ENCODE measurements at regions of chr10 and their contacts with region 1.

Region 1: GRCh38 chr10:93482145-93482834 is at the start of gene MYOF:
- DNase-seq: peak; percentile 71
- ATAC-seq: peak; percentile 83
- H3K4me3 Mint-ChIP-seq: peak within 1 kb of the TSS; percentile 81
- H3K27ac Mint-ChIP-seq: peak within 1 kb of the TSS; percentile 83
- H3K4me1 Mint-ChIP-seq: peaks cover 18% of the 10 kb centered on the region
- H3K27me3 Mint-ChIP-seq: peaks cover 25% of the 10 kb centered on the region
- total RNA-seq, gene MYOF: 5.5 to 6.6 TPM

Region 2: DNA sequence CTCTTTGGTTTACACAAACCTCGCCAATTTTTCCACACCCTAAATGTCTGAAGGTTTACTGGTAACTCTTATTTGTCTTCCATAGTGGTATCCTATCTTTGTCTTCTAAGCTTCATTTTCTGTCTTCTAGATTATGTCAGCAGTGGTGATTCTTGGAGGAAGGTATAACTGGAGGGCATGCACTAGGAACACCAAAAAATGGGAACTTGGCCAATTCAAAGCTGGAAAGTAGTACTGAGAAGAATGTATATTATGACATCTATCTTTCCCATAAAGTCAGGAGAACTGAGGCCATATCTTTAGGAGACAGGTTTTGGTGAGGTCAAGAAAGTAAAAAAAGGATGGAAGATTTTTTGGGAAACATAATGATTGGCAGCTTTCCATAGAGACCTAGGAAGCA is 1304.7 kb before region 1 on chr10:
- CTCF ChIA-PET with region 1: no interaction called
- DNase-seq: no peak
- ATAC-seq: no peak
- H3K4me3 Mint-ChIP-seq: no peak overlapping the region
- H3K27ac Mint-ChIP-seq: no peak overlapping the region
- H3K4me1 Mint-ChIP-seq: peaks cover 1% of the 10 kb centered on the region
- H3K27me3 Mint-ChIP-seq: no peaks in the 10 kb centered on the region

Region 3: GRCh38 chr10:93160829-93161228 is 321.5 kb before region 1 on chr10:
- CTCF ChIA-PET with region 1: no interaction called
- DNase-seq: no peak
- ATAC-seq: no peak
- H3K4me3 Mint-ChIP-seq: no peak overlapping the region
- H3K27ac Mint-ChIP-seq: no peak overlapping the region
- H3K4me1 Mint-ChIP-seq: no peaks in the 10 kb centered on the region
- H3K27me3 Mint-ChIP-seq: peaks cover 15% of the 10 kb centered on the region

Region 4: GRCh38 chr10:93363891-93364648 is 118.2 kb before region 1 on chr10:
- CTCF ChIA-PET with region 1: interaction called, 11 read pairs
- DNase-seq: no peak
- ATAC-seq: no peak
- H3K4me3 Mint-ChIP-seq: no peak overlapping the region
- H3K27ac Mint-ChIP-seq: no peak overlapping the region
- H3K4me1 Mint-ChIP-seq: peaks cover 2% of the 10 kb centered on the region
- H3K27me3 Mint-ChIP-seq: no peaks in the 10 kb centered on the region

Region 5: DNA sequence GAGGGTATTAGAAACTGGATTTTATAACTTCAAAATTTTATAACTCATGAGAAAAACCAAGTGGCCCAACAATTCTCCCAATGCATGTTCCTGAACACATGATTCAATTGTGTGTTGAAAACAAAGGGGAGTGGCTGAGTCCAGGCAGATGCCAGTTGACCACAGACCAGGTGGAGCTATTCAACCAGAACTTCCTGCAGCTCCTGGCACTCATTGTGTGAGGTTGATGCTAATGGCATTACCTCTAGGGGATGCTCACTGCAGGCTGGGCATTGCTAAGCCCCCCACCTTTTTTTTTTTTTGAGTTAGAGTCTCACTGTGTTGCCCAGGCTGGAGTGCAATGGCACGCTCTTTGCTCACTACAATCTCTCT is 20.5 kb before region 1 on chr10:
- CTCF ChIA-PET with region 1: interaction called, 36 read pairs
- DNase-seq: peak; percentile 45
- ATAC-seq: no peak
- H3K4me3 Mint-ChIP-seq: no peak overlapping the region
- H3K27ac Mint-ChIP-seq: peak overlapping the region; percentile 4
- H3K4me1 Mint-ChIP-seq: peaks cover 22% of the 10 kb centered on the region
- H3K27me3 Mint-ChIP-seq: no peaks in the 10 kb centered on the region

Region 6: DNA sequence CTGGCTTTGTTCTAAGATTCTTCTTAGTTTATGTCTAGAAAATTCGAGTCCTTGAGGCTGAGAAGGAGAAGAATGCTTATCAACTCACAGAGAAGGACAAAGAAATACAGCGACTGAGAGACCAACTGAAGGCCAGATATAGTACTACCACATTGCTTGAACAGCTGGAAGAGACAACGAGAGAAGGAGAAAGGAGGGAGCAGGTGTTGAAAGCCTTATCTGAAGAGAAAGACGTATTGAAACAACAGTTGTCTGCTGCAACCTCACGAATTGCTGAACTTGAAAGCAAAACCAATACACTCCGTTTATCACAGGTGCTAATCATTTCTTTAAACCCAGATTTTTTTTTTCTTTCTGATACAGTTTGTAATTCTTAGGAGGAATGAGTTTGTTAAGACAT is 20.8 kb after region 1 on chr10:
- CTCF ChIA-PET with region 1: interaction called, 22 read pairs
- DNase-seq: no peak
- ATAC-seq: peak; percentile 27
- H3K4me3 Mint-ChIP-seq: peak overlapping the region; percentile 39
- H3K27ac Mint-ChIP-seq: peak overlapping the region; percentile 80
- H3K4me1 Mint-ChIP-seq: peaks cover 48% of the 10 kb centered on the region
- H3K27me3 Mint-ChIP-seq: no peaks in the 10 kb centered on the region